Pancreas (tissue), 10 donors: ENCODE measurements at regions of chr15 and their contacts with region 1.

Region 1: DNA sequence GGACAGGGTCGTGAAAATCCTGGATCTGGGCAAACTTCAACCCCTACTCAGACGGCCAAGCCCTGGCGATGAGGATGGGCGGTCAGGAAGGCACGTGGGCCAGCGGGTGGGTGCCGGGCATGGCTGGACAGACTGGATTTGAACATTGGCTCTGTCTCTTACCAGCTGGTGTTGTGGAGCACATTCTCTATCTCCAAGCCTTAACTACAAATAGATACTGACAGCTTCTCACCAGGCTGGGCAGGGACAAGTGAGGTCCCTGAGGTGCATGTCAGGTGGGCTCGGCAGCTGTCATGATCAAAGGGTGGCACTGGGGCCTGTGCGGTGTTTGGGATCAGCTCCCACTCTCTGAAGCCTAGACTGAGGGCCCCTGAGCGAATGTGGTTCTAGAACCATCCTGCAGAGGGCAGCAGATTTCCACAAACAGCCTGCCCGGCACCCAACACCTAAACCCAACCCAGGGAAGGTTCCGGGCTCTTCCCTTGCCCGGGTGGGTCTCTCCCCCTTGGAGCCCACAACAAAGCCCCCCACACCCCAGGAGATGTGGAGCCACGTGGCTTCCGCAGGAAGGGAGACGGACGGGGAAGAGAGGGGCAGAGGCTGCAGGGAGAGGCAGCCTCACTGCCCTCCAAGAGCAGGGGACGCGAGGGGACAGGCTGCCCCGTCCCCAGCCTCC is 58.4 kb downstream of the RGMA start:
- DNase-seq: peak; percentile 57 to 83 (median 74)
- ATAC-seq: peak; percentile 77 to 87 (median 82)
- H3K4me3 ChIP-seq: no peak overlapping the region
- H3K27ac ChIP-seq: peak overlapping the region in 1 of 4 donors; percentile 2
- H3K4me1 ChIP-seq: peaks cover 0 to 27% (median 5%) of the 10 kb centered on the region in 3 donors
- H3K27me3 ChIP-seq: no peaks in the 10 kb centered on the region
- CTCF ChIP-seq: peak; percentile 74 to 85 (median 80)

Region 2: DNA sequence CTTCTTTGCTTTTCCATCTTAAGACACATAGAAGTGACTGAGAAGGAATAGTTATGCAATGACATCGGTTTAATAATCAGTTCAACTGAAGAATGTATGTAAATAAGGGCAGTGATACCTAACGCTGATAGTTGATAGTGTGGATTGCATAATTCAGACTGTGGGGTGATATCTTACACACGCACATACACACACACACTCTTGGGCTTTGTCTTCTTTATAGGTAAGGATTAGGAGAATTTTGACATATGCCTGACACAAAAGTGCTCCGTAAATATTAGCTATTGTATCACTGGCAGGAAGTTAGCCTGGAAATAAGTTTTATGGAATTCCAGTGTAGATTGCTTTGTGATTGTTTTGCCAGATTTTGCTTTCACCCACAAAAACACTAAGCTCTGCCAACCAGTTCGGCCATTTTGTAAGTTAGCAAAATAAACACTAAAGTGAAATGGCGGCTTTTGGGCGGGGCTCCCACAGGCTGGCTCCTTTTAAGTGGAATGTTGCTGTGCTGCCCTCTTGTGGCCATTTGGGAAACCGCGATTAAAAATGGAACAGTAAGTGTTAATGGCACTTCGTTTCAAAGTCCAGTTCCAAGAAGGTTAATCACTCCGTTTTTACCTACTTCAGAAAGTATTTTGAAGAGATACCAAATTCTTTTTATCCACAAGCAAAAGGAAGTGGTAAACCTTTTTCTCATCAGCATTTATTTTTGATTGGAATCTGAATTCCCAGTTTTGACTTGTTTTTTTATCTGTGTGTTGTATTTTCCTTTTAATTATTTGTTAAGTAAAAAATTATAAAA is 112.8 kb before region 1 on chr15:
- intact Hi-C with region 1: no loop called
- DNase-seq: peak; percentile 90 to 95 (median 92)
- ATAC-seq: peak; percentile 73 to 80 (median 76)
- H3K4me3 ChIP-seq: peak overlapping the region in 2 of 4 donors; percentile 11 to 15
- H3K27ac ChIP-seq: peak overlapping the region; percentile 25 to 92 (median 61)
- H3K4me1 ChIP-seq: peaks cover 28 to 87% (median 68%) of the 10 kb centered on the region in 3 donors
- H3K27me3 ChIP-seq: no peaks in the 10 kb centered on the region
- CTCF ChIP-seq: peak; percentile 74 to 88 (median 78)

Region 3: GRCh38 chr15:93583968-93584367 is 553.4 kb after region 1 on chr15:
- intact Hi-C with region 1: no loop called
- DNase-seq: no peak
- ATAC-seq: no peak
- H3K4me3 ChIP-seq: no peak overlapping the region
- H3K27ac ChIP-seq: no peak overlapping the region
- H3K4me1 ChIP-seq: no peaks in the 10 kb centered on the region
- H3K27me3 ChIP-seq: peaks cover 0 to 4% (median 0%) of the 10 kb centered on the region in 4 donors
- CTCF ChIP-seq: no peak

Region 4: GRCh38 chr15:93974804-93975481 is 944.4 kb after region 1 on chr15:
- intact Hi-C with region 1: loop called in 2 of 3 experiments (anchors 10 kb)
- DNase-seq: peak in 2 of 6 donors; percentile 13 to 45
- ATAC-seq: peak in 3 of 4 donors; percentile 73 to 85 (median 83)
- H3K4me3 ChIP-seq: no peak overlapping the region
- H3K27ac ChIP-seq: no peak overlapping the region
- H3K4me1 ChIP-seq: no peaks in the 10 kb centered on the region
- H3K27me3 ChIP-seq: peaks cover 0 to 7% (median 0%) of the 10 kb centered on the region in 4 donors
- CTCF ChIP-seq: peak; percentile 18 to 37 (median 26)

Region 5: GRCh38 chr15:94119923-94120775 is 1089.6 kb after region 1 on chr15:
- intact Hi-C with region 1: loop called in 2 of 3 experiments (anchors 5 to 10 kb)
- DNase-seq: peak in 4 of 6 donors; percentile 20 to 79 (median 54)
- ATAC-seq: peak; percentile 99 to 100 (median 100)
- H3K4me3 ChIP-seq: no peak overlapping the region
- H3K27ac ChIP-seq: no peak overlapping the region
- H3K4me1 ChIP-seq: no peaks in the 10 kb centered on the region
- H3K27me3 ChIP-seq: peaks cover 0 to 7% (median 0%) of the 10 kb centered on the region in 4 donors
- CTCF ChIP-seq: peak; percentile 59 to 88 (median 78)